GM10248 (cell line): ENCODE measurements at regions of chr12 and their contacts with region 1.

Region 1: DNA sequence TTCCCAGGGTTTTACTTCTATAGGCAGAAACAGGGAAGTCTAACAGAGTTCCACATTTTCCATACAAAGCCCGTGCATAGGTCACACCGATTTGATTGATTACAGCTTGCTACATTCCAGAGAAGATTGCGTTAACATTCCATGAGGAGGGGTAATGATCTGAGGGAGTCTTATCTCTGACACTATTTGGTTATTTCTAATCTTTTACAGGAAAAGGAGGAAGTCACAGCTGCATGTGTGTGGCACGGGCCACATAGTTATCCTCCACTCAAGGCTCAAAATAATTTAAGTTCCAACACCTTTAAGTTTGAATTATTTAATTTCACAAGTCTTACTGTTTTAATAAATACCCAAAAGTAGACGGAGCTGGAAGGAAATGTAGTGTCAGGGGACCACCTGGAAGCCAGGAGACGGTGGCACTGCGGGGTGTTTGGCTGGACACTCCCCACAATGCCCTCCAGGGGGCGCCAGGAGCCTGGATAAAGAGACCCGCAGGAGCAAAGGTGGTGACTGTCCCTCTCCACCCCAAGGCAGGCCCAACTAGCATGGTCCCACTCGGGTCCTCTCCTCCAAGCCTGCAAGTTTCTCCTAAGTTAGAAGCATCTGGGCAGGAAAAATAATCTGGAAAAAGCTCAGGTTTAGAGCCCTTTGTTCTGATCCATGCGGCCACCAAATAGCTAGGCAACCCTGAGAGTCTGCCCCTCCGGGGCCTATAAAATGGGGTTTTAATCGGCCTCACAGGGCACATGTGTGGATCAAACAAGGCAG is 20.2 kb downstream of the KRT8 start:
- DNase-seq: peak; percentile 83
- CTCF ChIP-seq: peak; percentile 82

Region 2: DNA sequence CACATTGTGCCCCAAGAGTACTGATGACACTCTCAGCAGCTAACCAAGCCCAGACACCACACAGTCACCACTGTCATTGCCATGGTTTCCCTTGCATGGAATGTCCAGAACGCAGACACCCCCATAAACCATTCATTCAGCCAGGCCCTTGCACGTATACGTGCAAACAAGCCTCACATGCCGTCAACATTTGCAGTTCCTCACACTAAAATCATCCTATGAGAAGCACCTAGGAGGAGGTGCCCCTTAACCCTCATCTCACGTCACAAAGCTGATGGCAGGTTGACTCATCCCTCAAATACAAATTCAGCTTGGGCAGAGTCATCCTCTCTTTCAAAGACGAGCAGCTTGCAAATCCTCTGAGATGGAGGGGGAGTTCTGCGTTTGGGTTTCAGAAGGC is 164.3 kb before region 1 on chr12:
- CTCF ChIA-PET with region 1: no interaction called
- POLR2A ChIA-PET with region 1: no interaction called
- DNase-seq: no peak
- CTCF ChIP-seq: no peak

Region 3: DNA sequence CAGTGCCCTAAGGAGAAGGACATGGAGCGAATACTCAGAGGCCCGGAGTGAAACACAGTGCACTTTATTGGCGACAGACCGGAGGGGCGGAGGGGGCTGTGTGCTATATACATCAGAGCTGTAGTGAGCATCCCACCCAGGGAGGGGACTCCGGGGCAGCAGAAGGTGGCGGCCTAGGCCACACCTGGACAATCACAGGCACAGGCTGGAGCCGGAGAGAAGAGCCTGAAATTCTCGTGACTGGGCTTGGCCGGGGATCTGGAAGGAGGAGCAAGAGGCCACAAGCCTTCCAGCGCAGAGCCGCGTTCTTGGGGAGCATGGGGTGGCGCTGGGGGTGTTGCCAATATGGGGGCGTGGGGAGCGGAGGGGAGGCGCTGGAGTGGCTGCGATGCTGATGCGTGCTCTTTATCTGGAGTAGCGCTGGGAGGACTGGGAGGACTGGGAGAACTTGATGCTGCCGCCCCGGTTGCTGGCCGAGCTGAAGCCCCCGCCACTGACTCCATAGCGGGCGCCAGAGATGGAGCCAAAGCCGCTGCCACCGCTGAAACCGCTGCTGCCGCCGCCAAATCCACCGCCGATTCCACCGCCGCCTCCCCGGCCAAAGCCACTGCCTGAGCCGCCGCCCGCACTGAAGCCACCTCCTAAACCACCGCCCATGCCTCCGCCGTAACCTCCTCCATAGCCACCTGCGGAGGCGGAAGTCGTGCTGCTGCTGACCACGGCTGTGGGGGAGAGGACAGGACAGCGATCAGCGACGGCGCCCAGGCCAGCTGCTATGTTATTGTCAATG is 94.9 kb before region 1 on chr12:
- CTCF ChIA-PET with region 1: no interaction called
- POLR2A ChIA-PET with region 1: no interaction called
- DNase-seq: no peak
- CTCF ChIP-seq: no peak

Region 4: GRCh38 chr12:52870351-52871290 is 14.1 kb before region 1 on chr12:
- CTCF ChIA-PET with region 1: interaction called, 55 read pairs
- POLR2A ChIA-PET with region 1: no interaction called
- DNase-seq: peak; percentile 79
- CTCF ChIP-seq: peak; percentile 63

Region 5: GRCh38 chr12:52906774-52907486 is 22.2 kb after region 1 on chr12:
- CTCF ChIA-PET with region 1: interaction called, 105 read pairs
- POLR2A ChIA-PET with region 1: no interaction called
- DNase-seq: no peak
- CTCF ChIP-seq: no peak

Region 6: DNA sequence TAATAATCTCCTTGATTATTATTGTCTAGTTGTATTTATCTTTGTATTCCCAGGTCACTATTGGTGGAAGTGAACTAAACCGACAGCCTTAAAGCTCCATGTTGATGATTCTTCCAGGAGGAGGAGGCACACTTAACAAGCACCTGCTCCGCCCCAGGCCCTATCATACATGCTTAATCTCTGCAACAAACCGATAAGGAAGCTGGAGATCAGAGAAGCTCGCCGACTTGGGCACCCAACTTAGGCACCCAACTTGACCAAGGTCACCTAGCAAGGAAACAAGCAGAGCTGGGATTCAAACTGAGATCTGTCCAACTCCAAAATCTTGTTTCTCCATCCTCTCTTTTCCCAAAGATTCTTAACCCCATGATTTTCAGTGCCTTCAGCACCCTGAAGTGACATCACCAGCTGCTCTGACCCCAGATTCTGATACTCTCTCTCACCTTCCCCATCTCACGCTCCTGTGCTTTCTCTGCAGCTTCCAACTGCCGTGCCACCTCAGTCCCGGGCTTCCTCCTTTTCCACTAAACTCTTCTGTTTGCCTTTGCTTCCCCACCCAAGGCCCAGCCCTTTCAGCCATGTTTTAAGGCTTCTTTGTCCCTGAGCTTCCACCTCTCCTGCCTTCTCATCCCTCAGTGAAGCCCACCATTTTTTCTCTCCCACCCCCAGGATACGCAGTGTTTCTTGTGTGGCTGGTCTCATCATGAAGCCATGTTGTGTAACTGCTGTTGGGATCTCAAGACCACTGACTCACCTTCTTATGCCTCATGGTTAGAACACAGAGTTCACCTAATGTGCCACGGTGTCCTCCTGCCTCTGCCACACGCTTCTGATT is 57.6 kb after region 1 on chr12:
- CTCF ChIA-PET with region 1: interaction called, 15 read pairs
- POLR2A ChIA-PET with region 1: no interaction called
- DNase-seq: no peak
- CTCF ChIP-seq: no peak

Region 7: DNA sequence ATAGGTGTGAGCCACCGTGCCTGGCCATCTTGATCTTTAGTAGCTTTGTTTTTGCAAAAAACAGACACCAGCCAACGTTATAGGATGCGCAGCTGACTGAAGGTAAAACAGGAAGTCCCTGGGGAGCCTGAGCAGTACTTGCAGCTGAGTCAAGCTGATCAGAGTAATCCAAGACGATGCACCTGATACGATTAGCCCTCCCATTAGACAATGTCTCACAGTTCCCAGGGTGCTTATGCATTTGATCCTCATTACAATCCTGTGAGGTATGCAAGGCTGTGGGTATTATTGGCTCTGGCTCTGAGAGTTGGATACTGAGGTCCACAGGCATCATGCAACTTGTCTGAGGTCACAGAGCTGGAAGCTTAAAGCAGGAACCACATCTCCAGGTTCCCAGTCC is 72.3 kb after region 1 on chr12:
- CTCF ChIA-PET with region 1: interaction called, 21 read pairs
- POLR2A ChIA-PET with region 1: no interaction called
- DNase-seq: no peak
- CTCF ChIP-seq: no peak

Region 8: GRCh38 chr12:53391729-53392128 is 507.0 kb after region 1 on chr12:
- CTCF ChIA-PET with region 1: no interaction called
- POLR2A ChIA-PET with region 1: no interaction called
- DNase-seq: no peak
- CTCF ChIP-seq: no peak